ENCODE measurements at regions of chr20 and their contacts with region 1.

Region 1: GRCh38 chr20:32031007-32031958 is 20.8 kb upstream of the HCK start:
- DNase-seq: no peak
- ATAC-seq: peak; percentile 56
- H3K4me3 ChIP-seq: 0 out of 2 replicates have a peak overlapping the region, but pooled peaks have one; percentile 24
- H3K27ac ChIP-seq: no peak overlapping the region
- H3K4me1 ChIP-seq: peaks cover 28% of the 10 kb centered on the region
- H3K27me3 ChIP-seq: no peaks in the 10 kb centered on the region; a peak in 1 of 4 replicates
- CTCF ChIP-seq: peak; percentile 76 to 99 (median 96)
- EP300 ChIP-seq: no peak
- POLR2A ChIP-seq: no peak
- RAD21 ChIP-seq: peak; percentile 54

Region 2: GRCh38 chr20:31849455-31849925 is 181.8 kb before region 1 on chr20:
- CTCF ChIA-PET with region 1: interaction called, 129 read pairs
- POLR2A ChIA-PET with region 1: interaction called, 4 read pairs
- RAD21 ChIA-PET with region 1: interaction called, 26 read pairs
- SMC1A ChIA-PET with region 1: interaction called, 81 read pairs
- in situ Hi-C with region 1: no loop called
- intact Hi-C with region 1: loop called (anchors 1 kb)
- DNase-seq: no peak
- ATAC-seq: no peak
- H3K4me3 ChIP-seq: no peak overlapping the region
- H3K27ac ChIP-seq: no peak overlapping the region
- H3K4me1 ChIP-seq: peaks cover 5% of the 10 kb centered on the region; the same call in 1 of the 2 replicates
- H3K27me3 ChIP-seq: no peaks in the 10 kb centered on the region; a peak in 2 of 4 replicates
- CTCF ChIP-seq: no peak
- EP300 ChIP-seq: no peak
- POLR2A ChIP-seq: no peak
- RAD21 ChIP-seq: no peak

Region 3: DNA sequence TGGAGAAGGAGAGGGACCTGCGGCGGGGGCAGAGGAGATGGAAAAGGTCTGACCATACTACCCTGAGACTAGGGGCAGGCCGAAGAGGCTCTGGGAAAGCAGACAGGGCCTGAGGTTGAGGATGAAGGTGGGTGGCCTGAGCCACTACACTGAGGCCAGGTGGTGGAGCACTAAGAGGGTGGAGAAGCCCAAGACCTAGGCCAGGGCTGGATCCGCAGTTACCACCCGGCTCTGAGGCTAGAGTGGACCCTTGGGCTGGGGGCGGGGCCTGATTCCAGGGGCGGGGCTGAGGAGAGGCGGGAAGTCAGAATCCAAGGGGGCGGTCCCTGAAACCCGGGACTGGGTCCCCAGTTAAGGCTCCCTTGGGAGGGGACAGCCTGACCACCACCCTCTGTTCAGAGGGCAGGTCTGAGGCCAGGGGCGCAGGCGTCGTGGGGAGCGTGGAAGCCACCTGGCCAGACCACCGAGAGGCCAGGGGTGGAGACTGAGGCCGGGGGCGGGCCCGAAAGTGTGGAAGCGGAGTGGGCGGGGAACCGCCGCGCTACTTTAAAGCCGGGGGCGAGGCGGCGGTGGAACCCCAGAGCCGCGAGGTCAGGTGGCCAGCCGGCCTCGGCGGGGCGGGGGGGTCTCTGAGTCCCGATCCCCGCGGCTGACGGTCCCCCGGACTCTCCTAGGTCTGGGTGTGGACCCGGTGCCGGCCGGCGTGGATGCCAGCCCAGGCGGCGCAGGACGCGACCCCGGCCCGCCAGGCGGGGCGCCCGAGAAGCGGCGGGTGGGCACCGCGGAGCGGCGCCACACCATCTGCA is 12.8 kb before region 1 on chr20:
- CTCF ChIA-PET with region 1: interaction called, 12 read pairs
- POLR2A ChIA-PET with region 1: no interaction called
- RAD21 ChIA-PET with region 1: interaction called, 3 read pairs
- SMC1A ChIA-PET with region 1: interaction called, 7 read pairs
- in situ Hi-C with region 1: no loop called
- intact Hi-C with region 1: no loop called
- DNase-seq: no peak
- ATAC-seq: peak; percentile 74
- H3K4me3 ChIP-seq: peak overlapping the region; percentile 53; the same call in 1 of the 2 replicates
- H3K27ac ChIP-seq: no peak overlapping the region
- H3K4me1 ChIP-seq: no peaks in the 10 kb centered on the region
- H3K27me3 ChIP-seq: peaks cover 8 to 12% of the 10 kb centered on the region in 2 experiments
- CTCF ChIP-seq: no peak
- EP300 ChIP-seq: no peak
- POLR2A ChIP-seq: no peak
- RAD21 ChIP-seq: no peak

Region 4: GRCh38 chr20:32072168-32072750 is 41.0 kb after region 1 on chr20:
- CTCF ChIA-PET with region 1: interaction called, 85 read pairs
- POLR2A ChIA-PET with region 1: interaction called, 6 read pairs
- RAD21 ChIA-PET with region 1: interaction called, 215 read pairs
- SMC1A ChIA-PET with region 1: interaction called, 108 read pairs
- in situ Hi-C with region 1: no loop called
- intact Hi-C with region 1: no loop called
- DNase-seq: no peak
- ATAC-seq: no peak
- H3K4me3 ChIP-seq: no peak overlapping the region
- H3K27ac ChIP-seq: no peak overlapping the region
- H3K4me1 ChIP-seq: peaks cover 23% of the 10 kb centered on the region
- H3K27me3 ChIP-seq: no peaks in the 10 kb centered on the region
- CTCF ChIP-seq: no peak
- EP300 ChIP-seq: no peak
- POLR2A ChIP-seq: no peak
- RAD21 ChIP-seq: no peak

Region 5: GRCh38 chr20:32098786-32099185 is 67.5 kb after region 1 on chr20:
- CTCF ChIA-PET with region 1: interaction called, 140 read pairs
- POLR2A ChIA-PET with region 1: no interaction called
- RAD21 ChIA-PET with region 1: interaction called, 220 read pairs
- SMC1A ChIA-PET with region 1: interaction called, 344 read pairs
- in situ Hi-C with region 1: loop called (anchors 5 kb)
- intact Hi-C with region 1: no loop called
- DNase-seq: no peak
- ATAC-seq: no peak
- H3K4me3 ChIP-seq: no peak overlapping the region
- H3K27ac ChIP-seq: no peak overlapping the region
- H3K4me1 ChIP-seq: no peaks in the 10 kb centered on the region
- H3K27me3 ChIP-seq: no peaks in the 10 kb centered on the region
- CTCF ChIP-seq: no peak
- EP300 ChIP-seq: no peak
- POLR2A ChIP-seq: no peak
- RAD21 ChIP-seq: no peak

Region 6: DNA sequence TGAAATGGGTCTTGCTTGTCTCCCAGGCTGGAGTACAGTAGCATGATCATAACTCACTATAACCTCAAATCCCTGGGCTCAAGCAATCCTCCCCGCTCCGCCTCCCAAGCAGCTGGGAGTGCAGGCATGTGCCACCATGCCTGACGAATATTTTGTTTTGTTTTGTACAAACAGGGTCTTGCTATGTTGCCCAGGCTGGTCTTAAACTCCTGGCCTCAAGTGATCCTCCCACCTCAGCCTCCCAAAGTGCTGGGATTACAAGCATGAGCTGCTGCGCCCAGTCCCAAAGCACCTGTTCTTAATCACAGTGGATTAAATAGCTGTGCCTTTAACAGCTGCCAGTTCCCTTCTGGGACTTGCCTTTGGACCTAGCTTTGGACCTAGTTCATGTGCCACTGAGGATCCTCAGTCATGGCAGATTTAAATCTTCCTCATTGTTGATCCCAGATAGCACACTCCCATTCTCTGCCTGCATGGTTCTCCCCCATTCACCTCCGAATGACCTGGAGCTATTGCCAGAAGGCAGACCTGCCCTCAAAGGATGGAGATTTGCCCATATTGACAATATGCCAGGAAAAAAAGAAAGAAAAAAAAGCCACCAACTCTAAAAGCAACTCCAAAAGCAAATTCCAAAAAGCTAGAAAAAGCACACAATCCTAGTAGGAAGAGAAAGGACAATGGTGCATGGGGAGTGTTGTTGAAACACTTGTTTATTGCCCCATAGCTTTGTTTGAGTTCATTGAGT is 187.0 kb after region 1 on chr20:
- CTCF ChIA-PET with region 1: no interaction called
- POLR2A ChIA-PET with region 1: no interaction called
- RAD21 ChIA-PET with region 1: no interaction called
- SMC1A ChIA-PET with region 1: no interaction called
- in situ Hi-C with region 1: no loop called
- intact Hi-C with region 1: no loop called
- DNase-seq: no peak
- ATAC-seq: no peak
- H3K4me3 ChIP-seq: no peak overlapping the region
- H3K27ac ChIP-seq: no peak overlapping the region
- H3K4me1 ChIP-seq: no peaks in the 10 kb centered on the region
- H3K27me3 ChIP-seq: no peaks in the 10 kb centered on the region
- CTCF ChIP-seq: no peak
- EP300 ChIP-seq: no peak
- POLR2A ChIP-seq: no peak
- RAD21 ChIP-seq: no peak